ENCODE measurements at regions of chr20 and their contacts with region 1.

Region 1: GRCh38 chr20:407133-407952 is 756 bp upstream of the RBCK1 start:
- DNase-seq: peak; percentile 87
- ATAC-seq: peak; percentile 74
- H3K4me3 Mint-ChIP-seq: peak overlapping the region; percentile 78
- H3K27ac Mint-ChIP-seq: peak overlapping the region; percentile 87
- H3K4me1 Mint-ChIP-seq: peaks cover 43% of the 10 kb centered on the region
- H3K27me3 Mint-ChIP-seq: no peaks in the 10 kb centered on the region

Region 2: DNA sequence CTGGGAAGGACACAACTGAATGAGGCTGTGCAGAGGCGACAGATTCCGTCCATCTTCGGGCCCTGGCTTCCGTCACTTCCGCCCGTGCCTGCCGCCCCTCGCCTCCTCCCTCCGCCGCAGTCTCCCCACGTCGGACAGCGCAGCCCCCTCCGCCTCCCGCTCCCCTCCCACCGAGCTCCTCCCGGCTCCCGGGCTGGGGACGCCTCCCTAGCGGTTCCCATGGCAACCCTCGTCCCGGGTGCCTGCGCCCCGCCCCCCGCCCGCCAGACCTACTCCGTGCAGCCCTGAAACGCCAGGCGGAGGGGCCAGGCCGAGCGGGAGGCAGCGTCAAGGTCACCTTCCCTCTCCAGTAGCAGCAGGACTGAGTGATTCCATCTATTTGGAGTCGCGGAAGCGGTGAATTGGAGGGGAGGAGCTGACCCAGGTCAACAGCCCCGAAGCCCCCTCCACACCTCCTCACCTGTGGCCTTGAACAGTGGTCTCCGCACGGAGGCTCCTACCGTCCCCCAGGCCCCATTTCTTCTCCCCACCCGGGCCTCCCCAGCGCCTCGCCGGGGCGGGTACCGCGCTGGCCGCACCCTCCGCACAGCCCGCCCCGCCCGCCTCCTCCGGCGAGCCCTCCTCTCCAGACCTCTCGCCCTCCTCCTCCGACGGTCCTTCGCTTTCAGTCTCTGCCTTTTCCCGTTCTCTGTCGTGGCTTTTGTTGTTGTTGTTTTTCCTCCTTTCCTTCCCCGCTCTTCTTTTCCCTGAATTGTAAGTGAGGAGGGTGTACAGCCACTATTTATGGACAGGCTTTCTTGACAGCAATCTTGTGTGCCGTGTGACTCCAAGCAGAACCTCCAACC is 59.5 kb before region 1 on chr20:
- CTCF ChIA-PET with region 1: interaction called, 7 read pairs
- POLR2A ChIA-PET with region 1: no interaction called
- intact Hi-C with region 1: loop called in 1 of 2 experiments (anchors 1 kb)
- DNase-seq: peak; percentile 78
- ATAC-seq: peak; percentile 76
- H3K4me3 Mint-ChIP-seq: peak overlapping the region; percentile 82
- H3K27ac Mint-ChIP-seq: peak overlapping the region; percentile 42
- H3K4me1 Mint-ChIP-seq: peaks cover 10% of the 10 kb centered on the region
- H3K27me3 Mint-ChIP-seq: no peaks in the 10 kb centered on the region

Region 3: DNA sequence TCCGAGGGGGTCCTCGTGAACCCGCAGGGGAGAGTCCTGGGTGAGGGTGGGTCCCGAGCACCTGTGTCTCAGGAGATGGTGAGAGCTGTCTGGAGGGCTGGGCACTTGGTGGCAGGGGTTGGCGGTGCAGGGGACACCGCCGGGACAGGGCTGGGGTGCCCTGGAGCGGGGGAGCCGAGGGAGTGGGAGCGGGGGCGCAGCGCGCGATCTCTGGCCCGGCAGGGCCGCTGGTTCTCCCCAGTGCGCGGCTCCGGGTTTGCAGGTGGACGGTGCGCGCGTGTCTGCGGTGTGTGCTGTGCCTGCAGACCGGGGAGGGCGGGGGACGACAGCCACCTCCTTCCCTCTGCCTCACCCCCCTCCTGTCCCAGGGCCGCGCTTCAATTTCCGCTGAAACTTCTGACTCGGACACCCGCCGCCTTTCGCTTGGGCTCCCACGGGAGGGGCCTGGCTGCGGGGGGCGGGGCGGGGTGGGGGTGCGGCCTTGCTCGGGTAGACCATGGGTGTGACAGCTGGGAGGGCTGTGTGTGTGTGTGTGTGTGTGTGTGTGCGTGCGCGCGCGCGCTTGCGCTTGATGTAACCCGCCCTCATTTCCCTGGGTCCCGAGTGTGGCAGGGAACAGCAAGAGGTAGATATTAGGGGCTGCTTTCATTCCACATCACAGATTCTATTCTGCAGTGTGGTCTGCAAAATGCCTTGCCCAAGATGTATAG is 25.6 kb before region 1 on chr20:
- CTCF ChIA-PET with region 1: interaction called, 4 read pairs
- POLR2A ChIA-PET with region 1: interaction called, 3 read pairs
- intact Hi-C with region 1: loop called (anchors 1 kb)
- DNase-seq: peak; percentile 88
- ATAC-seq: peak; percentile 70
- H3K4me3 Mint-ChIP-seq: peak overlapping the region; percentile 81
- H3K27ac Mint-ChIP-seq: peak overlapping the region; percentile 83
- H3K4me1 Mint-ChIP-seq: peaks cover 14% of the 10 kb centered on the region
- H3K27me3 Mint-ChIP-seq: no peaks in the 10 kb centered on the region

Region 4: GRCh38 chr20:462199-462991 is 55.1 kb after region 1 on chr20 and contains the start of gene TBC1D20:
- CTCF ChIA-PET with region 1: interaction called, 3 read pairs
- POLR2A ChIA-PET with region 1: no interaction called
- intact Hi-C with region 1: loop called (anchors 1 kb)
- DNase-seq: peak; percentile 92
- ATAC-seq: peak; percentile 97
- H3K4me3 Mint-ChIP-seq: peak within 1 kb of the TSS; percentile 95
- H3K27ac Mint-ChIP-seq: peak within 1 kb of the TSS; percentile 94
- H3K4me1 Mint-ChIP-seq: peaks cover 42% of the 10 kb centered on the region
- H3K27me3 Mint-ChIP-seq: no peaks in the 10 kb centered on the region
- total RNA-seq, gene TBC1D20: 20.9 to 25.2 TPM

Region 5: GRCh38 chr20:543369-544152 is 136.2 kb after region 1 on chr20 and contains the start of gene CSNK2A1:
- CTCF ChIA-PET with region 1: interaction called, 4 read pairs
- POLR2A ChIA-PET with region 1: no interaction called
- intact Hi-C with region 1: loop called in 1 of 2 experiments (anchors 1 kb)
- DNase-seq: peak; percentile 97
- ATAC-seq: peak; percentile 97
- H3K4me3 Mint-ChIP-seq: peak within 1 kb of the TSS; percentile 94
- H3K27ac Mint-ChIP-seq: peak within 1 kb of the TSS; percentile 96
- H3K4me1 Mint-ChIP-seq: peaks cover 49% of the 10 kb centered on the region
- H3K27me3 Mint-ChIP-seq: no peaks in the 10 kb centered on the region
- total RNA-seq, gene CSNK2A1: 179 to 254 TPM

Region 6: DNA sequence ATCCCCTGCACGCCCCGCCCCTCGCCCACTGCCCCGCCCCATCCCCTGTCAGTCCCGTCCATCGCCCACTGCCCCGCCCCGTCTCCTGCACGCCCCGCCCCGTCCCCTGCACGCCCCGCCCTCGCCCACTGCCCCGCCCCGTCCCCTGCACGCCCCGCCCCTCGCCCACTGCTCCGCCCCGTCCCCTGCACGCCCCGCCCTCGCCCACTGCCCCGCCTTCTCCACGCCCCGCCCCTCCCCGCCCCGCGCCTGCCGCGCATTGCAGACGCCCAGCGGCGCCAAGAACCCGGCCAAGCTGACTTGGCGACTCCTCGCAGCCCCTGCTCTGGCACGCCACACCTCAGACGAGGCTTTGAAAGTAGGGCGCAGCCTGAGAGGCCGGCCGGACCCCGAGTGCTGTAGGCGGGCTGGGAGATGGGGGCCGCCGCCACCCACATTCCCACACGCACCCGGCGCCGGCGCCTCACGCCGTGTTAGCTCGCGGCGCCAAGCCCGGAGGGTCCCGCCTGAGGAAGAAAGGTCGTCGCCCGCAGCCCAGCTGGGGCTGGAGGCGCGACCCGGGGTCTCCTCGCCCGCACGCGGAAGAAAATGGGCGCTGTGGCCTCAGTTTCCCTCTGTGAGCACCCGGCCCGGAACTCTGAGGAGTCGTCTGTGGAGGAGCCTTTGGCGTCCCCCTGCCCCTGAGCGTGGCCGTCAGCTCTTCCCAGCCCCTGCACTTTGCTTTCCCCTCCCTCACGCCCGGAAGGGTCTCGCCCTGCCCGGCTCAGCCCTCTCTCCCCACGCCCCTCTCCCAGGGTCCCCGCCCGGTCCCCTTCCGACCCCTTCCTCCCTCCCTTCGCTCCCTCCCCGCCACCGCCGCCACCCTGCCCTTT is 818.7 kb after region 1 on chr20 and contains the start of gene RAD21L1:
- CTCF ChIA-PET with region 1: no interaction called
- POLR2A ChIA-PET with region 1: no interaction called
- intact Hi-C with region 1: loop called in 1 of 2 experiments (anchors 2 kb)
- DNase-seq: peak; percentile 94
- ATAC-seq: peak; percentile 85
- H3K4me3 Mint-ChIP-seq: peak within 1 kb of the TSS; percentile 75
- H3K27ac Mint-ChIP-seq: peak within 1 kb of the TSS; percentile 79
- H3K4me1 Mint-ChIP-seq: peaks cover 11% of the 10 kb centered on the region
- H3K27me3 Mint-ChIP-seq: peaks cover 9% of the 10 kb centered on the region
- total RNA-seq, gene RAD21L1: 0.32 TPM in 1 of 2 experiments, not detected in the other